HAP-1 (cell line): ENCODE measurements at regions of chr6 and their contacts with region 1.

Region 1: GRCh38 chr6:46983007-46983411 is 59.1 kb downstream of the ADGRF1 start:
- DNase-seq: no peak
- H3K4me3 ChIP-seq: no peak overlapping the region
- H3K4me1 ChIP-seq: no peaks in the 10 kb centered on the region
- H3K27me3 ChIP-seq: no peaks in the 10 kb centered on the region

Region 2: GRCh38 chr6:46584586-46584985 is 398.4 kb before region 1 on chr6:
- in situ Hi-C with region 1: no loop called
- DNase-seq: no peak
- H3K4me3 ChIP-seq: no peak overlapping the region
- H3K4me1 ChIP-seq: no peaks in the 10 kb centered on the region
- H3K27me3 ChIP-seq: no peaks in the 10 kb centered on the region

Region 3: DNA sequence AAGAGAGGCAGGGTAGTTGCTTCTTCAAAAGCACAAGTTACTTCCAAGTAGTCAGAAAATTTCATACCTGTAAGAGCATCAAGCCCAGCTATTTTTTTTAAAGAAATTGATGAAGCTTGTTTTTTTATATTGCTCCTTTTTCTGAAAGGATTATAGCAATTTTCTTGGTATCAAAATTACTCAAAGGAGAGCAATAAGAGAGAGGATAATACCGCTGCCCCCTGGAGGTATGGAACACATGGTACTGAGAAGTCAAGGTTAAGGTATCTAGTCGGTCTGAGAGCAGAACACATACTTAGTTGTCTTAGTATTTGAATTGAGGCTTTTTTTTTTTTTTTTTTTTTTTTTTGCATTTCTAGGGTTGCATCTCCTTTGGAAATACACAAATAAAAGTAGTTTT is 120.6 kb before region 1 on chr6:
- in situ Hi-C with region 1: loop called (anchors 25 kb)
- DNase-seq: no peak
- H3K4me3 ChIP-seq: no peak overlapping the region
- H3K4me1 ChIP-seq: no peaks in the 10 kb centered on the region
- H3K27me3 ChIP-seq: no peaks in the 10 kb centered on the region

Region 4: GRCh38 chr6:47073125-47074110 is 90.4 kb after region 1 on chr6:
- in situ Hi-C with region 1: no loop called
- DNase-seq: no peak
- H3K4me3 ChIP-seq: no peak overlapping the region
- H3K4me1 ChIP-seq: no peaks in the 10 kb centered on the region
- H3K27me3 ChIP-seq: peaks cover 6% of the 10 kb centered on the region